Activated CD4-positive, alpha-beta T cell treated with anti-CD3 and anti-CD28 coated beads, Interleukin-2, amount 10 ng/mL, durations not matched to agents 24 days and 14 days (primary cell): ENCODE measurements at regions of chr6 and their contacts with region 1.

Region 1: GRCh38 chr6:41936073-41936837 is 5.4 kb downstream of the CCND3 start:
- DNase-seq: peak; percentile 96
- H3K4me3 Mint-ChIP-seq: peak overlapping the region; percentile 100
- H3K27ac Mint-ChIP-seq: peak overlapping the region; percentile 87
- H3K4me1 Mint-ChIP-seq: peaks cover 68% of the 10 kb centered on the region
- H3K27me3 Mint-ChIP-seq: no peaks in the 10 kb centered on the region

Region 2: GRCh38 chr6:41846666-41847237 is 89.5 kb before region 1 on chr6:
- intact Hi-C with region 1: loop called (anchors 1 kb)
- DNase-seq: peak; percentile 90
- H3K4me3 Mint-ChIP-seq: no peak overlapping the region
- H3K27ac Mint-ChIP-seq: no peak overlapping the region
- H3K4me1 Mint-ChIP-seq: peaks cover 10% of the 10 kb centered on the region
- H3K27me3 Mint-ChIP-seq: no peaks in the 10 kb centered on the region

Region 3: GRCh38 chr6:41895300-41896233 is 40.7 kb before region 1 on chr6 and contains the start of gene USP49:
- intact Hi-C with region 1: loop called (anchors 1 kb)
- DNase-seq: peak; percentile 97
- H3K4me3 Mint-ChIP-seq: no peak within 1 kb of the TSS
- H3K27ac Mint-ChIP-seq: peak within 1 kb of the TSS; percentile 90
- H3K4me1 Mint-ChIP-seq: peaks cover 12% of the 10 kb centered on the region
- H3K27me3 Mint-ChIP-seq: peaks cover 4% of the 10 kb centered on the region
- total RNA-seq, gene USP49: 5.8 and 6.3 TPM in 2 replicates

Region 4: GRCh38 chr6:41909727-41910126 is 26.5 kb before region 1 on chr6:
- intact Hi-C with region 1: no loop called
- DNase-seq: no peak
- H3K4me3 Mint-ChIP-seq: no peak overlapping the region
- H3K27ac Mint-ChIP-seq: peak overlapping the region; percentile 21
- H3K4me1 Mint-ChIP-seq: peaks cover 22% of the 10 kb centered on the region
- H3K27me3 Mint-ChIP-seq: no peaks in the 10 kb centered on the region